Activated CD8-positive, alpha-beta memory T cell treated with anti-CD3 and anti-CD28 coated beads, Interleukin-2, amount 10 ng/mL, durations not matched to agents 7 days and 5 days (primary cell): ENCODE measurements at regions of chr5 and their contacts with region 1.

Region 1: DNA sequence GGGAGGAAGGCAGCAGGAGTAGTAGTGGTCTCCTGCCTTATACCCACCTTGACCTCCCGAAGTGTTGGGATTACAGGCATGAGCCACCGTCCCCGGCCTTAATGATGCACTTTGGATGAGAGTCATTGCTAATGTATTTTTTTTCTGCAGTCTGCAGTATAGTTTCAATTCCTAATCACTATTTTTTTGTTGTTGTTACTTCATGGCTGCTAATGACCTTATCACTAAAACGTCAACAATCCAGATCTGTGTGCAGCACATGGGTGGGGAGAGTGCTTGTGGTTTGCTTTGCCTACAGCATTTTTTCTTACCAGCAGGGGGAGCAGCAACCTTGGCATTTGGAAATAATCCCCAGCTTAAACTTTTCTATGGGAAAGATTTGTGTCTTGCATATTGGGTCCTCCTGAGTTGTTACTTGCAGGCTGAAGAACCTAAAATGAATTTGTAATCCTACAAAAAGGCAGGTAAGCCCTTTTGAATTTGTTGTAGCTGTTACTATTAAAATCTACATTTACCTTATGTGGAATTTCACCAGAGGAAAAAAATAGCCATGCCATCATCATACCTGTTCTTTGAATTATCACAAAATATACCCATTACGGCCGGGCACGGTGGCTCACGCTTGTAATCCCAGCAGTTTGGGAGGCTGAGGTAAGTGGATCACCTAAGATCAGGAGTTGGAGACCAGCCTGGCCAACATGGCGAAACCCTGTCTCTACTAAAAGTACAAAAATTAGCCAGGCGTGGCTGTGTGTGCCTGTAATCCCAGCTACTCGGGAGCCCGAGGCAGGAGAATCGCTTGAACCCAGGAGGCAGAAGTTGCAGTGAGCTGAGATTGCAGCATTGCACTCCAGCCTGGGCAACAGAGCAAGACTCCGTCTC is 6.3 kb upstream of the MED7 start:
- DNase-seq: peak; percentile 87
- ATAC-seq: peak; percentile 85
- H3K4me3 Mint-ChIP-seq: no peak overlapping the region
- H3K27ac Mint-ChIP-seq: peak overlapping the region; percentile 16
- H3K4me1 Mint-ChIP-seq: peaks cover 44% of the 10 kb centered on the region
- H3K27me3 Mint-ChIP-seq: no peaks in the 10 kb centered on the region

Region 2: GRCh38 chr5:157167214-157167621 is 18.2 kb after region 1 on chr5:
- CTCF ChIA-PET with region 1: interaction called, 13 read pairs
- DNase-seq: no peak
- ATAC-seq: peak; percentile 56
- H3K4me3 Mint-ChIP-seq: peak overlapping the region; percentile 41
- H3K27ac Mint-ChIP-seq: peak overlapping the region; percentile 81
- H3K4me1 Mint-ChIP-seq: peaks cover 48% of the 10 kb centered on the region
- H3K27me3 Mint-ChIP-seq: no peaks in the 10 kb centered on the region

Region 3: DNA sequence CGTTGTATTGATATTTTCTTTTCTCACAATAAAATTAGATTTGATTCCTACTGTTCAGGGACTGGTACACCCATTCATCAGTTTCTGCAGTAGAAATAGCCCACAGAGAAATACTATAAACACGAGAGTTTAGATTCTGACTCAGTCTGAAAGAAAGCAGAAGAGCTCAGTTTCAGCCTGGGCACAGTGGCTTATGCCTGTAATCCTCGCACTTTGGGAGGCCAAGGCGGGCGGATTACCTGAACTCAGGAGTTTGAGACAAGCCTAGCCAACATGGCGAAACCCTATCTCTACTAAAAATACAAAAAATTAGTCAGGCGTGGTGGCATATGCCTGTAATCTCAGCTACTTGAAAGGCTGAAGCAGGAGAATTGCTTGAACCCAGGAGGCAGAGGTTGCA is 40.2 kb after region 1 on chr5:
- CTCF ChIA-PET with region 1: interaction called, 15 read pairs
- DNase-seq: peak; percentile 59
- ATAC-seq: peak; percentile 50
- H3K4me3 Mint-ChIP-seq: peak overlapping the region; percentile 96
- H3K27ac Mint-ChIP-seq: peak overlapping the region; percentile 84
- H3K4me1 Mint-ChIP-seq: peaks cover 82% of the 10 kb centered on the region
- H3K27me3 Mint-ChIP-seq: no peaks in the 10 kb centered on the region

Region 4: DNA sequence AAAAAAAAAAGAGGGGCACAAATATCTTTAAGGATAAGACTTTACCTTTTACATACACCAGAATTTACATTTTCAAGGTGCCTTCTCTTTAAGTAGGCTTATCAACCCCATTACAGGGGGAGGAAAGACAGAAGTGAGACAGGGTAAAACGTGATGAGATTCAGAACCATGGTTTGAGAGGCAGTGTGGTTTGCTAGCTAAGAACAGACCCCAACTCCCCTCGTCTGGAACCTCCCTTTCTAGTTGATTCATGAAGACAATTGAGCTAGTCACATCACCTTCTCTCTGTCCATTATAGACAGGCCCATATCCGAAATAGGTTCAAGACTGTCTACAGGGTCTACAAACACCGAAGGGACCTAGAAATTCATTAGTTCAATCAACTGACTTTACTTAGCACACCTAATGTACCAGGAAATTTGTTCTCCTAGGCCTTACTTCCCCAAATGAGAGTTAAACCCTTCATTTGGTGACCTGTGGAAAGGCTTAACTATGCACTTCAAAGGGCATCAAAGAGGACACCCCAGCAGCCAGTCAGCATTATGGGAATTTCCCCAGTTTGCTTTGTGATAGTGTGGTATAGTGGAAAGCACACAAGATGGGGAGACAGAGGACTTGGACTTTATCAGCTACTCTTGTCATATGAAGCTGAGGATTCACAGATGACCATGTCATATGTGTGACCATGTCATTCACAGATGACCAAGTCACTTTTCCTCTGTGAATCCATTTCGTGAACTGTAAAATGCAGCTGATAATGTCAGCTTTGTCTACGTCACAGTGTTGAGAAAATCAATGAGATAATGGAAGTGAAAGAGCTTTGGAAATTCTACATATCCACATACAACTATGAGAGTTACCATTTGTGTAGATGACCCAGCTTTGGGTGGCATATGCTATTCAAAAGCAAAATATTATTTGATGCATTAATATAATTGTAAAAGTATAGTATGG is 76.8 kb after region 1 on chr5:
- CTCF ChIA-PET with region 1: interaction called, 10 read pairs
- DNase-seq: no peak
- ATAC-seq: no peak
- H3K4me3 Mint-ChIP-seq: peak overlapping the region; percentile 48
- H3K27ac Mint-ChIP-seq: peak overlapping the region; percentile 82
- H3K4me1 Mint-ChIP-seq: peaks cover 65% of the 10 kb centered on the region
- H3K27me3 Mint-ChIP-seq: no peaks in the 10 kb centered on the region

Region 5: DNA sequence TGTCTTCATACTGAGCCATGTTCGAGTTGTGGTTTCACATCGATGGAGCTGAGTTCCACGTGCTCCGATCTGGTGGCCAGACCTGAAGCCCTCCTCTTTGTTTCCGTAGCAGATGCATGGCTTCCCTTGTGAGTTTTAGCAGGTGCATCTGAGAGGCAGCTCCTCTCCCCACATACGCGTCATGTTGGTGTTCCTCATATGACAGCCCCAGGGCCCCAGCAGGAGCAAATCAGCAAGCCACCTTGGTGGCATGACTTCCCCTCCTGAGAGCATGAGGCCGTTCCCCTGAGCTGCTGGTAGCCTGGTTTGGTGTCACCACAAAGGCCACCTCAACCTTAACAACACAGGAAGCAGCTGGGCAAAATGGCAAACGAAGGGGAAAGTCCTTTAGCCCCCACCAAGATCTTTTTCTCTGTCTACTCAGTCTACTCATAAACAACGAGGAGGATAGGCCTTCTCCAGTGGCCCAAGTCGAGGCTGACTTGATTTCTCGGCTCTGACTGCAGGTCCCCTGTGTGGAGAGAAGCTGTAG is 122.8 kb after region 1 on chr5:
- CTCF ChIA-PET with region 1: interaction called, 15 read pairs
- DNase-seq: peak; percentile 98
- ATAC-seq: peak; percentile 80
- H3K4me3 Mint-ChIP-seq: peak overlapping the region; percentile 64
- H3K27ac Mint-ChIP-seq: peak overlapping the region; percentile 97
- H3K4me1 Mint-ChIP-seq: peaks cover 78% of the 10 kb centered on the region
- H3K27me3 Mint-ChIP-seq: no peaks in the 10 kb centered on the region